Motor neuron (in vitro differentiated cells): ENCODE measurements at regions of chr7 and their contacts with region 1.

Region 1: GRCh38 chr7:95684037-95684436 is 87.7 kb upstream of the PDK4 start:
- ATAC-seq: peak in 5 of 8 experiments; percentile 35 to 80 (median 78)
- H3K4me3 ChIP-seq: no peak overlapping the region
- H3K27ac ChIP-seq: no peak overlapping the region
- H3K4me1 ChIP-seq: no peaks in the 10 kb centered on the region

Region 2: DNA sequence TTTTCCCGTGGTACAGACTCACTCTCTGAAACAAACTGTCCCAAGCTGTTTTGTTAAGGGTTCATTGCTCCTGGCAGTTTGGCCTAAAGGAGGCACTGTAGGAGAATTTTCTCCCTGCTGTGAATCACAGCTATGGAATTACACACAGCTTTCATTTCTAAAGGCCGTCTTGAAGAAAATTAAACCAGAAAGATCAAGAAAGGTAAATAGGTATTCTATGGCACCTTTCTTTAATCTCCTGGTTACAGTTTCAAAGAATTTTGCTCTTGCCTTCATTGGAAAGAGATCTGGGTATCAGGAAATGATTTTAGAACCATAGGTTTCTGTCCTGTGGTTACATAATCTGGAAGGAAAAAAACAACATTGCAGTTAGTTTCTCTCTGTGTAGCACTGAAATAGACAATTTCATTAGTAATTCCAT is 138.9 kb before region 1 on chr7:
- in situ Hi-C with region 1: loop called in 6 of 9 experiments (anchors 5 to 25 kb)
- ATAC-seq: peak in 6 of 8 experiments; percentile 60 to 96 (median 84)
- H3K4me3 ChIP-seq: no peak overlapping the region
- H3K27ac ChIP-seq: no peak overlapping the region
- H3K4me1 ChIP-seq: no peaks in the 10 kb centered on the region

Region 3: DNA sequence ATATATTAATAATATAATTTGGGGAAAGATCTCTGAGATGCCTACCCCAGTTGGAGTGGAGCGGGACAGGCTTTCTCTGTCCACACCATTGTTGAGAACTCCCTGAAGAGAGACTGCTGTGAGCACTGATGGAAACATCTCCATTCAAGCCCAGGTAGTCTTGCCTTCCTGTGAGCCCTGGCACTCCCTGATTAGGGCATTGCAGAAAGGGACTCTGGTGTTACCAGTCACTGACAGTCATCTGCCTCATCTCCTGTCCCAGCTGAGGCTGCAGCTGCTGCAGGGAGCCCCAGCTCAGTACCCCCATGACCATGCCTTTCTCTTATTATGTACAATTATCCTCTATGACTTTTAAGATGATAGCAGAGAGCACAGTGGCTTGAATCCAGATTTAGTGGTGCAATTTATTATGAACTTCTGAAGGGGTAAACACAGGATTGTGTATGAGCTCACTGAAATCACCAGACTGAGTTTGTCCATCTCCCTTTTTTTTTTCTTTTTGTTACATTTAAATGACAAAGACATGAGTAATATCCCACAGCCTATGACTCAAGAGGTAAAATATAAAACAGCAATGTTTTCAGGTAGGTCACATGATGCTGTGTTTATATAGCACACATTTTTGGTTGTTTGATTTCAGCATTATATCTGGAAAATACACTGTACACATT is 401.0 kb after region 1 on chr7:
- in situ Hi-C with region 1: no loop called
- ATAC-seq: peak in 6 of 8 experiments; percentile 23 to 67 (median 55)
- H3K4me3 ChIP-seq: no peak overlapping the region
- H3K27ac ChIP-seq: no peak overlapping the region
- H3K4me1 ChIP-seq: no peaks in the 10 kb centered on the region